Endothelial cell of umbilical vein (primary cell): ENCODE measurements at regions of chr12 and their contacts with region 1.

Region 1: DNA sequence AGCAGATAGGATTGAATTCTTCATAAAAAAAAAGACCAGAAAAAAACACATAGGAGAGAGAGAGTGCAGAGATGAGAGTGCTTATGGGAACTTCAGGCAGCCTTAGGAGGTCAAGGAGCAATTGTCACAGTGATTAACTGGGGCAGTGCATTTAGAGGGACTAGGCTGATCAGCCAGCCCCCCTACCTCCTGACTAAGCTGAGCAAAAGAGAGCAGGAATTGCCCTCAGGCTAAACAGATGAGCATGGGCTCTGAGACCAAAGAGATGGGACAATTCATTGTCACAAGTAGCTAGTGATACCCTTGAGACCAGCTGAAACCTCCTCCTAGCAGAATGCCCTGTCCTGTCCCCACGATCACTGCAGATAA is 124.0 kb downstream of the BTG1 start:
- DNase-seq: no peak
- H3K4me3 ChIP-seq: no peak overlapping the region
- H3K27ac ChIP-seq: no peak overlapping the region
- H3K4me1 ChIP-seq: no peaks in the 10 kb centered on the region
- H3K27me3 ChIP-seq: no peaks in the 10 kb centered on the region
- CTCF ChIP-seq: no peak
- POLR2A ChIP-seq: no peak

Region 2: GRCh38 chr12:92010853-92011701 is 10.6 kb before region 1 on chr12:
- CTCF ChIA-PET with region 1: no interaction called
- POLR2A ChIA-PET with region 1: no interaction called
- dilution Hi-C with region 1: no loop called
- intact Hi-C with region 1: no loop called
- DNase-seq: no peak
- H3K4me3 ChIP-seq: no peak overlapping the region
- H3K27ac ChIP-seq: no peak overlapping the region
- H3K4me1 ChIP-seq: no peaks in the 10 kb centered on the region
- H3K27me3 ChIP-seq: no peaks in the 10 kb centered on the region
- CTCF ChIP-seq: no peak
- POLR2A ChIP-seq: no peak

Region 3: GRCh38 chr12:92034858-92035401 is 13.3 kb after region 1 on chr12:
- CTCF ChIA-PET with region 1: interaction called, 11 read pairs
- POLR2A ChIA-PET with region 1: no interaction called
- dilution Hi-C with region 1: no loop called
- intact Hi-C with region 1: no loop called
- DNase-seq: peak; percentile 87
- H3K4me3 ChIP-seq: peak overlapping the region in 1 of 3 experiments; percentile 21
- H3K27ac ChIP-seq: peak overlapping the region; percentile 22
- H3K4me1 ChIP-seq: peaks cover 17% of the 10 kb centered on the region
- H3K27me3 ChIP-seq: no peaks in the 10 kb centered on the region
- CTCF ChIP-seq: no peak
- POLR2A ChIP-seq: no peak